ENCODE measurements at regions of chr19 and their contacts with region 1.

Region 1: GRCh38 chr19:21092109-21092508 is 10.1 kb downstream of the ZNF714 start:
- DNase-seq: no peak
- ATAC-seq: no peak

Region 2: GRCh38 chr19:21138130-21138529 is 46.0 kb after region 1 on chr19:
- intact Hi-C with region 1: no loop called
- DNase-seq: no peak
- ATAC-seq: no peak

Region 3: GRCh38 chr19:21151460-21151859 is 59.4 kb after region 1 on chr19:
- intact Hi-C with region 1: loop called (anchors 5 kb)
- DNase-seq: no peak
- ATAC-seq: no peak